Transverse colon (tissue), 4 donors: ENCODE measurements at regions of chr18 and their contacts with region 1.

Region 1: DNA sequence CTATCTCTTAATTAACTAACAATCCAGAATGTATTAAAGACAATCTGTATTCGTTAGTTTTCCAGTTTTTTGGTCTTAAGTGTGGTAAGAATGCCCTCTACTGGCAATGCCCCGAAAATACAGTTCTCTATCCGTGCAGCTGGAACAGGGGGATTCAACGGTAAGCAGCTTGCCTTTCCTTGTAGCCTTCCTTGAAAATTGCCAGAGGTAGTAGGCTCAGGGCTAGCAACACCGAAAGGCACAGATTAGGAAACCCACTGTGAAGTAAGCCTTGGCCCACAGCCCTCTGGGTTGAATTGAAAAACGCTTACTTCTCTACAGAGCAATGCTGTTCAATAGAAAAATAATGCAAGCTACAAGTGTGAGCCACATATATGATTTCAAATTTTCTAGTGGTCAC is 17.1 kb upstream of the VPS4B start:
- DNase-seq: peak; percentile 52
- H3K4me3 ChIP-seq: no peak overlapping the region
- H3K27ac ChIP-seq: no peak overlapping the region
- H3K4me1 ChIP-seq: peaks cover 0 to 9% (median 4%) of the 10 kb centered on the region in 4 donors
- H3K27me3 ChIP-seq: no peaks in the 10 kb centered on the region
- CTCF ChIP-seq: peak; percentile 74 to 83 (median 79)
- EP300 ChIP-seq: no peak
- POLR2A ChIP-seq: no peak

Region 2: DNA sequence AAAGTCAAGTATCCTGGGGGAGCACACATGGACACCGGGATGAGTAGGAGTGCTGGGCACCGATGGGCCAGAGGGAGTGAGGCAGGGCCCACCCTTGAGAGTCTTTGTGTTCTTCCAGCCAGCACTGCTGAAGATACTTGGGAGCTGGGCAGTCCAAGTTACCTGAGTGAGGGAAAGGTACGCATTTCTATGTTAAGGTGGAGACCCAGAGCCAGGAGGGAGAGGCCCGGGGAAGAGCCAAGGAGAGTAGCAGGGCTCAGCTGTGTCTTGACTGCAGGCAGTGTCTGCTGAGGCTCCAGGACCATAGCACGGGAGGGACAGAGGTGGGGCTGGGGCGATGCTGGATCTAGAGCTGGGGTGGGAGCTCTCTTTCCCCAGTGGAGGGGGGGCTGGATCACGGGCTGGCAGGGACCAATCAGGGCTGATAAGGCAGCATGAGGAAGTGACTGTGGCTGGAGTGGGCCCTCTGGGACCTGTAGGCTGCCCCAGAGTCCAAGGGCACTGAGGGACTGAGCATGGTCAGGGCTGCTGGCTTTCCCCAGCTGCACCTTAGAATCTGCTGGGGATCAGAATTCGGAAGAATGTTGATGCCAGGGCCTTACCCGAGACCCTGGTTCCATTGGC is 434.8 kb before region 1 on chr18:
- in situ Hi-C with region 1: loop called in 2 of 4 experiments (anchors 10 to 25 kb)
- intact Hi-C with region 1: no loop called
- DNase-seq: no peak
- H3K4me3 ChIP-seq: no peak overlapping the region
- H3K27ac ChIP-seq: no peak overlapping the region
- H3K4me1 ChIP-seq: no peaks in the 10 kb centered on the region
- H3K27me3 ChIP-seq: no peaks in the 10 kb centered on the region
- CTCF ChIP-seq: no peak
- EP300 ChIP-seq: no peak
- POLR2A ChIP-seq: no peak

Region 3: GRCh38 chr18:63131106-63131958 is 308.0 kb before region 1 on chr18:
- in situ Hi-C with region 1: loop called (anchors 10 to 25 kb)
- intact Hi-C with region 1: no loop called
- DNase-seq: peak; percentile 74
- H3K4me3 ChIP-seq: no peak overlapping the region
- H3K27ac ChIP-seq: peak overlapping the region; percentile 55 to 64 (median 62)
- H3K4me1 ChIP-seq: peaks cover 0 to 20% (median 16%) of the 10 kb centered on the region in 4 donors
- H3K27me3 ChIP-seq: no peaks in the 10 kb centered on the region
- CTCF ChIP-seq: peak; percentile 61 to 72 (median 68)
- EP300 ChIP-seq: no peak
- POLR2A ChIP-seq: no peak

Region 4: GRCh38 chr18:63339920-63340484 is 99.3 kb before region 1 on chr18:
- in situ Hi-C with region 1: loop called (anchors 10 to 25 kb)
- intact Hi-C with region 1: no loop called
- DNase-seq: no peak
- H3K4me3 ChIP-seq: no peak overlapping the region
- H3K27ac ChIP-seq: no peak overlapping the region
- H3K4me1 ChIP-seq: peaks cover 0 to 7% (median 6%) of the 10 kb centered on the region in 4 donors
- H3K27me3 ChIP-seq: no peaks in the 10 kb centered on the region
- CTCF ChIP-seq: peak in 4 of 5 experiments; percentile 13 to 45 (median 40)
- EP300 ChIP-seq: no peak
- POLR2A ChIP-seq: no peak

Region 5: GRCh38 chr18:63539904-63540510 is 100.7 kb after region 1 on chr18:
- in situ Hi-C with region 1: no loop called
- intact Hi-C with region 1: no loop called
- DNase-seq: no peak
- H3K4me3 ChIP-seq: no peak overlapping the region
- H3K27ac ChIP-seq: no peak overlapping the region
- H3K4me1 ChIP-seq: no peaks in the 10 kb centered on the region
- H3K27me3 ChIP-seq: no peaks in the 10 kb centered on the region
- CTCF ChIP-seq: no peak
- EP300 ChIP-seq: no peak
- POLR2A ChIP-seq: no peak